Breast epithelium (tissue), 4 donors: ENCODE measurements at regions of chr1 and their contacts with region 1.

Region 1: DNA sequence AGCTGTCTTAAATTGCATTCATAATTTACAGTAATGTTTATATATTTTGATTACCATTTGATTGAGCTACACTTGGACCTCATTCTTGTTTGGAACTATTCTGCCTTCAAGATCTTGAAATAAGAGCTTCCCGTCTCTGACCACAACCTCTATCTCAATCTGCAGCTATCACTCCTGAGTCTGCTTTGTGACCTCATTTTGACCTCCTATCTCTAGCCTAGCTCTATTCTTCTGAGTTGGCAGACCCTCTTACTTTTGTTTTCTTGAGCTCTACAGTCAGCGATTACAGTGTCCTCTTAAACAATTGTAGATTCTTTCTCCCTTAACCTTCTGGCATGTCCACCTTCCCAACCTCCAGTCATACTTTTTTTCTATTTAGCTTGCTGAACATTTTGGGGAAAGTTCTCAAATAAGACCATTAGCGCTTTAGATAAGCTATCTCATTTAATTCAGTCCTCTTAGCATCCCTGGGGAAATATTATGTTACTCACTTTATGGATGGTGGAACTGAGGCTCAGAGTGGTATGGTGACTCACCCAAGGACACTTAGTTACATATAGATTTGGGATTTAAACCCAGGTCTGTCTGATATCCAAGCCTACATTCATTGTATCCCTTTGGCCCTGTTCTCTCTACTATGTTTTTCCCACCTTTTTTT is 19.1 kb downstream of the RPAP2 start:
- DNase-seq: no peak
- H3K4me3 ChIP-seq: no peak overlapping the region
- H3K27ac ChIP-seq: no peak overlapping the region
- H3K4me1 ChIP-seq: no peaks in the 10 kb centered on the region
- H3K27me3 ChIP-seq: no peaks in the 10 kb centered on the region
- CTCF ChIP-seq: no peak
- POLR2A ChIP-seq: no peak

Region 2: DNA sequence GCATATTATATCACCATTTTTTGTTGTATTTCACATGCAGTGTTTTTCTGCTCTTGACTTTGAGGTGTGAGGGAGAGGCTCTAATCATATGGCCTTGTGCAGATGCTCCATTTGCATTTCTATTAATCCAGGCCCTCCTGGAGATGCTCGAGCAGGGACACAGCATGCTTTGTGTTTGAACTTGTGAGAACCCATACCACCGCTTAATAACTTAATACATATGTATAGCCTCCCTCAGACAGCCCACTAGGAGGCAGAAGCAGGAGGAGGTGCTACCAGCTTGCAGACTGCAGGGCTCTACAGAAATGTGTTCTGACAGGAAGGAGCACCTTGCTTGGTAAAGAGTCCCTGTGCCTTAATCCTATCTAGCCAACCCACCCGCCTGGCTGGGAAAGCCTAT is 1756.1 kb before region 1 on chr1:
- intact Hi-C with region 1: loop called (anchors 5 kb)
- DNase-seq: no peak
- H3K4me3 ChIP-seq: no peak overlapping the region
- H3K27ac ChIP-seq: no peak overlapping the region
- H3K4me1 ChIP-seq: no peaks in the 10 kb centered on the region
- H3K27me3 ChIP-seq: no peaks in the 10 kb centered on the region
- CTCF ChIP-seq: no peak
- POLR2A ChIP-seq: no peak